H1 (cell line): ENCODE measurements at regions of chr12 and their contacts with region 1.

Region 1: GRCh38 chr12:6867413-6868210 is at the start of gene TPI1:
- DNase-seq: peak in 1 of 2 experiments; percentile 67
- H3K4me3 ChIP-seq: peak within 1 kb of the TSS; percentile 84 to 98 (median 86)
- H3K27ac ChIP-seq: peak within 1 kb of the TSS; percentile 71
- H3K4me1 ChIP-seq: peaks cover 7 to 48% (median 25%) of the 10 kb centered on the region in 4 experiments
- H3K27me3 ChIP-seq: no peaks in the 10 kb centered on the region
- CTCF ChIP-seq: no peak
- EP300 ChIP-seq: no peak
- POLR2A ChIP-seq: peak in 1 of 2 experiments; percentile 97; a peak in 2 of 3 replicates
- RAD21 ChIP-seq: no peak
- total RNA-seq, gene TPI1: 902 and 910 TPM in 2 replicates

Region 2: GRCh38 chr12:6839482-6840201 is 28.0 kb before region 1 on chr12:
- CTCF ChIA-PET with region 1: interaction called, 19 read pairs
- POLR2A ChIA-PET with region 1: interaction called, 588 read pairs
- DNase-seq: no peak
- H3K4me3 ChIP-seq: no peak overlapping the region
- H3K27ac ChIP-seq: no peak overlapping the region
- H3K4me1 ChIP-seq: peaks cover 0 to 3% (median 2%) of the 10 kb centered on the region in 4 experiments; a peak in 1 of 7 replicates
- H3K27me3 ChIP-seq: no peaks in the 10 kb centered on the region
- CTCF ChIP-seq: no peak
- EP300 ChIP-seq: no peak
- POLR2A ChIP-seq: no peak
- RAD21 ChIP-seq: no peak

Region 3: DNA sequence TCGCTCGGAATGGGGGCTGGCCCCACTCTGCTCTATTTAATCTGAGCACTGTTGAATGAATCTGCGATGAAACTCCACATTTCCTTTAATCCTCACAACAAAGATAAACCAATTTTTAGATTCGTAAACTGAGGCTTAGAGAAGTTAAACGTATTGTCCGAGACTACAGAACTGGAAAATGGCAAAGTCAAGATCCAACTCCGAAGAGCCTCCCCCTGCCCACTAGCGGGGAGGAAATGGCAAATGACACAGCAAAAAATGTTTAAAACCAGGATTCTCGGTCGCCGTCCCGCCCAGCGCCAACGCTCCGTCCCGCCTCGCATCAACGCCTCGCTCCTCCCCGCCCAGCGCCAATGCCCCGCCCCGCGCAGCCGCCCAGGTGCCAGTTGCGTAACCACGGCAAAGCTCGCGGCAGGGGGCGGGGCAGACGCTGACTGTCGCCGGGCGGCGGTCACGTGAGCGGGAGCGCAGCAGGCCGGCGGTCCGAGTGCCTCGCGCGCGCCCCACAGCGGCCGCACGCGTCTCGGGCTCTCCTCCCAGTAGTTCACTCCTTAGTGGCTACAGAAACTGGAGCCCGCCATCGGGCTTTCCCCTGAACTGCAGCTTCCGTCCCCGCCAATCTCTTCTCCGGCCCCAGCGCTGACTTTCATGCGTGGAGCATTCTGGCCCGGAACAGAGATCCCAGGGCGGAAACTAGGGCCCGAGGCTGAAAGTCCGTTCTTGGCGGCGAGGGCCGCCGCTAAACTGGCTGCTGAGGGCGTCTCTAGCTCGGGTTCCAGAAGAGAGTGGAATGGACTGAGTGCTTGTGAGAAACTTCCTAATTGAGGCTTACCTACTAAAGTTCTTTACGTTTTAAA is 23.4 kb after region 1 on chr12:
- CTCF ChIA-PET with region 1: interaction called, 84 read pairs
- POLR2A ChIA-PET with region 1: interaction called, 86 read pairs
- DNase-seq: peak; percentile 92 to 99
- H3K4me3 ChIP-seq: peak overlapping the region; percentile 31 to 63 (median 56)
- H3K27ac ChIP-seq: peak overlapping the region; percentile 76
- H3K4me1 ChIP-seq: peaks cover 0 to 9% (median 2%) of the 10 kb centered on the region in 4 experiments; a peak in 4 of 7 replicates
- H3K27me3 ChIP-seq: no peaks in the 10 kb centered on the region
- CTCF ChIP-seq: peak; percentile 72 to 96 (median 78)
- EP300 ChIP-seq: peak in 1 of 2 experiments; percentile 61; a peak in 1 of 3 replicates
- POLR2A ChIP-seq: peak; percentile 71 to 84
- RAD21 ChIP-seq: peak; percentile 42 to 61

Region 4: DNA sequence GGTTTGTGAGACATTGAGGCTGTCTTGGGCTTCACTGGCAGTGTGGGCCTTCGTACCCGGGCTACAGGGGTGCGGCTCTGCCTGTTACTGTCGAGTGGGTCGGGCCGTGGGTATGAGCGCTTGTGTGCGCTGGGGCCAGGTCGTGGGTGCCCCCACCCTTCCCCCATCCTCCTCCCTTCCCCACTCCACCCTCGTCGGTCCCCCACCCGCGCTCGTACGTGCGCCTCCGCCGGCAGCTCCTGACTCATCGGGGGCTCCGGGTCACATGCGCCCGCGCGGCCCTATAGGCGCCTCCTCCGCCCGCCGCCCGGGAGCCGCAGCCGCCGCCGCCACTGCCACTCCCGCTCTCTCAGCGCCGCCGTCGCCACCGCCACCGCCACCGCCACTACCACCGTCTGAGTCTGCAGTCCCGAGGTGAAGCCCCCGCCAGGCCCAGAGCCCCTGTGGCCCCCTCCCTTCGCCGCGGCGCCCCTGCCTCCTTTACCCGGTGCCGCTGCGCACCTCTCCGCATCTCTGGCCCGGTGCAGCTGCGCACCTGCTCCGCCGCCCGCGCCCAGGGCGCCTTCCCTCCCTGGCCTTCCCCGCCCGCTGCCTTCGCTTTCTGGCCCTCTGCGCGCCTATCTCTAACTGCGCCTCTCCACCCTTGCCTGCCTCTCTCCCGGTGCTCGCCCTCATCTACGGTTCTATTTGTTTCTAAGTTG is 46.8 kb after region 1 on chr12 and contains the start of gene ENO2:
- CTCF ChIA-PET with region 1: interaction called, 23 read pairs
- POLR2A ChIA-PET with region 1: interaction called, 304 read pairs
- DNase-seq: peak in 1 of 2 experiments; percentile 72
- H3K4me3 ChIP-seq: peak within 1 kb of the TSS; percentile 67 to 86 (median 78)
- H3K27ac ChIP-seq: 0 out of 2 replicates have a peak within 1 kb of the TSS, but pooled peaks have one; percentile 26
- H3K4me1 ChIP-seq: peaks cover 0 to 18% (median 9%) of the 10 kb centered on the region in 4 experiments; a peak in 6 of 7 replicates
- H3K27me3 ChIP-seq: no peaks in the 10 kb centered on the region
- CTCF ChIP-seq: no peak
- EP300 ChIP-seq: no peak
- POLR2A ChIP-seq: no peak
- RAD21 ChIP-seq: no peak
- total RNA-seq, gene ENO2: 90.9 and 92.4 TPM in 2 replicates

Region 5: DNA sequence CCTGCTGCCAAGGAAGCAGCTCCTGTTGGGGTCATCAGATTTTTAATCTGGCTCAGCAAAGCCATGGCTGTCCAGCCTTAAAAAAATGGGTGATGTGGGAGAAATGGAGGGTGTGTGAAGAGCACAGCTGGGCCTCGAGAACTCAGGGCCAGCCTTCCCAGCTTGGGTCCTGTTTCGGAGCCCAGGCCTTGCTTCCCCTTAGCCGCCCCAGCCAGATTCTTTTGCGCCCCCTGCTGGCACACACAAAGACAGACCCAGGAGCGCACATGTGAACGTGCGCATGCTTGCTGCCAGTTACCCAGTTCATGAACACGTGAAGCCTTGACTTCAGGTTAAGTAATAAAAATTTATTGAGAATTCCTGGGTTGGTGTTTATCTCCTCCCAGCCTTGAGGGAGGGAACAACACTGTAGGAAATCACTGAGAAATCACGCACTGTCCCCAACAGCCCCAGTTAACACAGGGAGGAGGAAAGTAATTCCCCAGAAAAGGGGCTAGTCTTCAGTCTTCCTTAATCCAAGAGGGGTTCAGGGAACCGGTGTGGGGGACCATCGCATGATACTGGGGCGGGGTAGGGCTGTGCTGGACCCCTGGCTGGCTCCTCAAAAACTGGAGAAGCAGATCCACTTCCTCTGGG is 97.5 kb after region 1 on chr12:
- CTCF ChIA-PET with region 1: interaction called, 21 read pairs
- POLR2A ChIA-PET with region 1: interaction called, 87 read pairs
- DNase-seq: peak in 1 of 2 experiments; percentile 88
- H3K4me3 ChIP-seq: peak overlapping the region in 2 of 4 experiments; percentile 23 to 79; a peak in 2 of 8 replicates
- H3K27ac ChIP-seq: peak overlapping the region; percentile 43; the same call in 1 of the 2 replicates
- H3K4me1 ChIP-seq: peaks cover 12 to 50% (median 32%) of the 10 kb centered on the region in 4 experiments
- H3K27me3 ChIP-seq: no peaks in the 10 kb centered on the region
- CTCF ChIP-seq: peak in 2 of 3 experiments; percentile 78 to 90; a peak in 3 of 4 replicates
- EP300 ChIP-seq: no peak
- POLR2A ChIP-seq: peak in 1 of 2 experiments; percentile 46; a peak in 2 of 3 replicates
- RAD21 ChIP-seq: peak; percentile 64 to 72